ENCODE measurements at regions of chr9 and their contacts with region 1.

Region 1: GRCh38 chr9:99873531-99873930 is 32.9 kb upstream of the STX17 start:
- DNase-seq: no peak
- H3K4me3 ChIP-seq: no peak overlapping the region
- H3K27ac ChIP-seq: no peak overlapping the region
- H3K4me1 ChIP-seq: no peaks in the 10 kb centered on the region
- H3K27me3 ChIP-seq: no peaks in the 10 kb centered on the region
- CTCF ChIP-seq: no peak
- EP300 ChIP-seq: no peak
- POLR2A ChIP-seq: no peak

Region 2: DNA sequence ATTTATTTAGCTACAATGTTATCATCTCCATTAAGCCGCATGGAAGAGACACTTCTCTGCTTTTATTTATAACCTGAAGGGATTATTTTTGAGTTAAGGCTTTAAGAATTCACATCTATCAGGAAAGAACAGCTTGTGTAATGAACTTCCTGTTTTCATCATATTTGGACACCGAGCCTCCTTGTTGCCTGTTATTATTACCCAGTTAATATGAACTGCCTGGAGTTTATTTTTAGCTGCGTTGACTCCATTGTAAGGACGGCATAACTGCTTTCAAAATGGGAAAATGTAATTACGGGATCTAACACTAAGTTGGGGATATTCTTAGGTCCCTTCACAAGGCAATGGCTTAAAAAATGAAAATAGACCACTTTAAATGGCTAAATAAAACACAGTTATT is 140.8 kb before region 1 on chr9:
- intact Hi-C with region 1: no loop called
- DNase-seq: no peak
- H3K4me3 ChIP-seq: no peak overlapping the region
- H3K27ac ChIP-seq: no peak overlapping the region
- H3K4me1 ChIP-seq: no peaks in the 10 kb centered on the region
- H3K27me3 ChIP-seq: no peaks in the 10 kb centered on the region
- CTCF ChIP-seq: no peak
- EP300 ChIP-seq: no peak
- POLR2A ChIP-seq: no peak

Region 3: DNA sequence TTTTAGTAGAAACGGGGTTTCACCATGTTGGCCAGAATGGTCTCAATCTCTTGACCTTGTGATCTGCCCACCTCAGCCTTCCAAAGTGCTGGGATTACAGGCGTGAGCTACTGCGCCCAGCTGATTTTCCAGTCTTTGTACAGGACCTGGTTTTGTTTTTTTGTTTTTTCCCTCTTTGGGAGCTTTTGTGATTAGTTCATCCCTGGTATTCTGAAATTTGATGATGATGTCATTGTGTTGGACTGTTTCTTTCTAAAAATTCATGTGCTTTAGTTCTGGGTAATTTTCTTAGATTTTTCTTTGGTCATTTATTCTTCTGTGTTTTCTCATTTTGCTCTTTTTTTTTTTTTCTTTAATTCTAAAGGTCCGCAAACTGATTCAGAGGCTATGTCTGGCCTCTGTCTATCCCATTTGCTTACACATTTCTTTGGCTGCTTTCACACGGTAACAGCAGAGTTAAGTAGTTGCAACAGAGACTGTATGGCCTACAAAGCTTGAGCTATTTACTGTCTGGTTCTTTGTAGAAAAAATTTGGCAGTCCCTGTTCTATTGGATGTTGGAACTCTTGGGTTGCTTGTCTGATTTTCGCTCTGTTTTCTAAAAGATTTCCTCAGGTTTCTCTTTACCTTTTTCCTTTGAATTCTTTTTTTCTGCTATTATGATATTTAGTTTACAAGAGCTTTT is 57.8 kb after region 1 on chr9:
- intact Hi-C with region 1: loop called in 1 of 4 experiments (anchors 10 kb)
- DNase-seq: no peak
- H3K4me3 ChIP-seq: no peak overlapping the region
- H3K27ac ChIP-seq: no peak overlapping the region
- H3K4me1 ChIP-seq: no peaks in the 10 kb centered on the region
- H3K27me3 ChIP-seq: no peaks in the 10 kb centered on the region
- CTCF ChIP-seq: no peak
- EP300 ChIP-seq: no peak
- POLR2A ChIP-seq: no peak

Region 4: DNA sequence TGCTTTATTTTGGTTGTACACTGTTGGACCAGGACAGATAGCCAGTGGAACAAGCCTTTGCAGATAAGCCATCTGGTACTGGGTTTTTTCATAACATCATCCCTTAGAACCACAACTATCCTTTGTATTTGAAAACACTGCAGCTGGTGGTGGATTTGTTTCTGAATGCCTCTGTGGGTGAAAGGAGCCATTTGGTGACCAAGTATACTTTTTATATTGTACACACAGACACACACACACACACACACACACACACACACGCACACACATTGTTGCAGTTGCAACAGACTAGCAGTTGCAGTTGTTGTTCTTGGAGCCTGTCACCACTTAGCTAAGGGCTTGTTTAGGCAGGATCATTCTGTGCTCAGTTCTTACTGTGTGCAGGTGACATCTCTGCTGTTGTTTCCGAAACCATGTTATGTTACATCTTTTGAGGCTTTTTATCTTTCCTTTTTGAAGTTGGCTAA is 681.4 kb after region 1 on chr9:
- intact Hi-C with region 1: no loop called
- DNase-seq: no peak
- H3K4me3 ChIP-seq: no peak overlapping the region
- H3K27ac ChIP-seq: no peak overlapping the region
- H3K4me1 ChIP-seq: no peaks in the 10 kb centered on the region
- H3K27me3 ChIP-seq: no peaks in the 10 kb centered on the region
- CTCF ChIP-seq: no peak
- EP300 ChIP-seq: no peak
- POLR2A ChIP-seq: no peak